Activated CD4-positive, alpha-beta T cell treated with anti-CD3 and anti-CD28 coated beads, Interleukin-2, amount 10 ng/mL, durations not matched to agents 7 days and 5 days (primary cell): ENCODE measurements at regions of chr19 and their contacts with region 1.

Region 1: DNA sequence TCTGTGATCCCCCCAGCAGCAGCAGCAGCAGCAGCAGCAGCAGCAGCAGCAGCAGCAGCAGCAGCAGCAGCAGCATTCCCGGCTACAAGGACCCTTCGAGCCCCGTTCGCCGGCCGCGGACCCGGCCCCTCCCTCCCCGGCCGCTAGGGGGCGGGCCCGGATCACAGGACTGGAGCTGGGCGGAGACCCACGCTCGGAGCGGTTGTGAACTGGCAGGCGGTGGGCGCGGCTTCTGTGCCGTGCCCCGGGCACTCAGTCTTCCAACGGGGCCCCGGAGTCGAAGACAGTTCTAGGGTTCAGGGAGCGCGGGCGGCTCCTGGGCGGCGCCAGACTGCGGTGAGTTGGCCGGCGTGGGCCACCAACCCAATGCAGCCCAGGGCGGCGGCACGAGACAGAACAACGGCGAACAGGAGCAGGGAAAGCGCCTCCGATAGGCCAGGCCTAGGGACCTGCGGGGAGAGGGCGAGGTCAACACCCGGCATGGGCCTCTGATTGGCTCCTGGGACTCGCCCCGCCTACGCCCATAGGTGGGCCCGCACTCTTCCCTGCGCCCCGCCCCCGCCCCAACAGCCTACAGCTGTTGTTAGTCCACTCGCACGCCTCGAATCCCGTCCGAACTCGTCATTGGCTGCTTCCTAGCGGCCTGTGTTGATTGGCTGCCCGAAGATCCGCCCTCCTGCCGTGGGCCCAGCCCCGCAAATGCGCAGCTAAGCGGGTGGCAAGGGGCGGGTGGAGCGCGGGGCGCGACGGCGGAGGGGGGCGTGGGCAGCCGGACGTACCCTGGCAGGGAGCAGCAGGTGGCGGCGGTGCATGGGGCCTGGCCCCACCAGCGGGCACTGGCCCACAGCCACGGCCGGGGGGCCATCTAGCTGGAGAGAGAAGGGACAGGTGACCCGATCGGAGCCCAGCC is 1.4 kb upstream of the SIX5 start:
- DNase-seq: peak; percentile 89
- H3K4me3 Mint-ChIP-seq: peak overlapping the region; percentile 75
- H3K27ac Mint-ChIP-seq: peak overlapping the region; percentile 84
- H3K4me1 Mint-ChIP-seq: peaks cover 21% of the 10 kb centered on the region
- H3K27me3 Mint-ChIP-seq: peaks cover 16% of the 10 kb centered on the region

Region 2: DNA sequence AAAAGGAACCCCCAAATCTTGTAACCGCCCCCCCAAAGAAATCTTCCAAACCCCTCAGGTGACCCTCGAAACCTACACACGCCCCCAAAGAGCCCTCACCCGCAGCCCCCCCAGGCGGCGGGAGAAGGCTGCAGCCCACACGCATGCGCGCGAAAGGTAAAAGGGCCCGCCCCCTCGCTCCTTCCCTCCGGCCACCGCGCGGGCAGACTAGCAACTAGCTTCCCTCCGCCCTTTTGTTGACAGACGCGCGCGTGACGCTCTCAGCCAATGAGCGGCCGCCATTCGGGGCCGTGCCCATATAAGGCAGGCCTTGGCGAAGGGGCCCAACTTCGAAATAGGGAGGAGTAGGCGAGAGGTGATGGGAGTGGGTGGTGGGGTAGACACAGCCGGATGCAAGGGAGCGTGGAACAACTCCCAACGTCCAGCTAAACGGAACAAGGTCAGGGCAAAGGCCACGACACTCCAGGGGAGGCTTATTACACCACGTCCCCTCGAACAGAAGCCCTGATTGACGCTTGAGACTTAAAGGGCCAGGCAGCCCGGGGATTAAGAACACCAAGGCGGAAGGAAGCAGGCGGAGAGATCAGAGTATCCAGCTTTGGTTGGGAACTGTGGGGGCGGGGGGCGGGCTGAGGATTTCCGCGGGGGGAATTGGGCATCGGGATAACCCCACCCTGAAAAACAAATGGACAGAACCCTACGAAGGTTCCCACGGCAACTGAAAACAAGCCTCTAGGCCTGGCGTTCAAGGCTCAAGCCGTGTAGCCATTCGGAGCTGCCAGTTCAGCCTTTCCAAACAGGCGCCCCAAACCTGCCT is 53.1 kb before region 1 on chr19:
- CTCF ChIA-PET with region 1: interaction called, 12 read pairs
- POLR2A ChIA-PET with region 1: interaction called, 4 read pairs
- DNase-seq: peak; percentile 99
- H3K4me3 Mint-ChIP-seq: peak overlapping the region; percentile 92
- H3K27ac Mint-ChIP-seq: peak overlapping the region; percentile 92
- H3K4me1 Mint-ChIP-seq: peaks cover 42% of the 10 kb centered on the region
- H3K27me3 Mint-ChIP-seq: no peaks in the 10 kb centered on the region

Region 3: DNA sequence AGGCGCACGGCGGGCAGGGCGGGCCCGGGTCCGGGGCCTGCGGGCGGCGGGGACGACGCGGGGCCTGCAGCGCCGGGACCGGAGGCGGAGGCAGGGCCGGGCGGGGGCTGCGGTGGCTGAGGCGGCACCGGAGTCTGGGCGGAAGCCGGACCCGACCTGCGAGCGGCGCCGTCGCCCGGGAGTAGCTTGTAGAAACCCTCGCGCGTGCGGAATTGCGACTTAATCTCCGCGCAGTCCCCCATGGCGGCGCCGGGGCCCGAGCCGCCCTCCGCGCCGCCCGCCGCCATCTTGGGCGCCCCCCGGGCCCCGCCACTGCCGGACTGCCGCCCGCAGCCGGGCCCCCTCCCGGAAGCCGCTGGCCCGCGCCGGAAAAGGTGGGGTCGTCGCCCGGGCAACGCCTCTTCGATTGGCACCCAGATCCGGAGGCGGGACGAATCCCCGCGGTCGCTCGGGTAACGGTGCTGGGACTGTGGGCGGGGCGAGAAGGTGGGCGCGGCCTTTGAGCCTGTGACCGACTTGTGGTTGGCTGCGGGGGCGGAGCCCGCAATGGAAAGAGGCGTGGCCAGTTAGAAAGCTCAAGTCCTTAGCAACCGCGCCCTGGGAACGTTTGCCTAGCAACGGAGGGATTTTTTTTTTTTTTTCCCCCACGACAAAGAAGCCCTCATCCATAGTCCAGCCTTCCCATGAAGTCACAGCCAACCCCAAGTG is 22.2 kb after region 1 on chr19 and contains the start of gene DMWD:
- CTCF ChIA-PET with region 1: interaction called, 45 read pairs
- POLR2A ChIA-PET with region 1: interaction called, 3 read pairs
- DNase-seq: peak; percentile 99
- H3K4me3 Mint-ChIP-seq: peak within 1 kb of the TSS; percentile 83
- H3K27ac Mint-ChIP-seq: peak within 1 kb of the TSS; percentile 77
- H3K4me1 Mint-ChIP-seq: peaks cover 30% of the 10 kb centered on the region
- H3K27me3 Mint-ChIP-seq: peaks cover 47% of the 10 kb centered on the region
- total RNA-seq, gene DMWD: 35.0 to 37.8 TPM

Region 4: DNA sequence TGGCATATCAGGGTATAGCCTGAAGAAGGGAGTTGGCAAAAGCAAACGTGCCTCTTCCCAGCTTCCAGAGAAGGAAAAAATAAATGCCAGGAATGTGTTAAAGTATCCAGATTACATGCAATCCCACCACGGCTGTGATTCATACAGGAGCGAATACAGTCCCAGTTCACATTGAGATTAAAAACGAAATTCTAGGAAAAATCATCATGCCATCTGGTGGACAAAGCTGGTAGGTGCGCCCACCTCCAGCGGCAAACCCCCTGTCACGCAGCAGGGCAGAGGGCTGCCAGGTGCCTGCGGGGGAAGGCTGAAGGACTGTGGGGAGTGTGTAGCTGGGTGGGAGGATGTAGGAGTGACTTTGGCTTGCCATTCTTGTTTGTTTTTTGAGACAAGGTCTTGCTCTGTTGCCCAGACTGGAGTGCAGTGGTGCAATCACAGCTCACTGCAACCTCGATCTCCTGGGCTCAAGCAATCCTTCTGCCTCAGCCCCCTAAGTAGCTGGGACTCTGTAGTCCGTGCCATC is 28.6 kb after region 1 on chr19:
- CTCF ChIA-PET with region 1: interaction called, 45 read pairs
- POLR2A ChIA-PET with region 1: interaction called, 4 read pairs
- DNase-seq: peak; percentile 56
- H3K4me3 Mint-ChIP-seq: no peak overlapping the region
- H3K27ac Mint-ChIP-seq: no peak overlapping the region
- H3K4me1 Mint-ChIP-seq: peaks cover 7% of the 10 kb centered on the region
- H3K27me3 Mint-ChIP-seq: peaks cover 50% of the 10 kb centered on the region

Region 5: DNA sequence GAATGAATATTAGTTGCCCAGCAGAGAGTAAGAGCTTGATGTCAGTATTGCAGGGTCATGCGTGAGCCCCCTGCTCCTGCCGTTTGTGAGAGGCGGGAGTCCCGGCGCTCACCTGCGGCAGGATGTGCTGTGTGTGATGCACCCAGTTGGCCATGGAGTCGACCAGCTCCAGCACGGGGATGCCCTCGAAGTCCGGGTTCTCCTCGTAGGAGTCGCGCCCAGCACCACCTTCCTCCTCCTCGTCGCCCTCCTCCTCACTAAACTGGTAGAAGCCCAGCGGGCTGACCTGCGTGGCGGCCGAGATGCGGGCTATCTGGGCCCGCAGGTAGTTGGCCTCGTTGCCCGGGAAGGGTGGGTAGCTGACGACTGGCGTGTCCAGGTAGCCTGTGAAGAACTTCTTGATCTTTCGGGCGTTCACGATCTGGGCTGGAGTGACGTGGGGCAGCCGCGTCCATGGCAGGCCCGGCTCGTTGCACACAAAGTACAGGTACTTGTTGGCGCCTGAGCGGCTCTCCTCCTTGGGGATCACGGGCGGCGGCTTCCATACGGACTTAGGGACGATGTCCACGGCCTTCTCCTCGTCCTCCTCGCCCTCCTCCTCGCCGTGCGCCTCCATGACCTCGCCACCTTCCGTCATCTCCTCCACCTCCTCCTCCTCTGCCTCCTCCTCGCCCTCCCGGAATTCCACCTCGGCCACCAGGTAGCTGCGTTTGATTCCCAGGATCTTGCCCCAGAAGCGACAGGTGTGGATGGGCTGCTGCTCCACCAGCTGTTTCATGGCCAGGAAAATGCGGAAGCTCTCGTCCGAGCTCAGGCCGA is 33.9 kb after region 1 on chr19:
- CTCF ChIA-PET with region 1: interaction called, 45 read pairs
- POLR2A ChIA-PET with region 1: interaction called, 4 read pairs
- DNase-seq: no peak
- H3K4me3 Mint-ChIP-seq: no peak overlapping the region
- H3K27ac Mint-ChIP-seq: no peak overlapping the region
- H3K4me1 Mint-ChIP-seq: peaks cover 1% of the 10 kb centered on the region
- H3K27me3 Mint-ChIP-seq: peaks cover 25% of the 10 kb centered on the region